ENCODE measurements at regions of chr2 and their contacts with region 1.

Region 1: GRCh38 chr2:102027036-102027980 is 35.5 kb downstream of the IL1R2 start:
- DNase-seq: peak in 1 of 5 donors; percentile 41
- ATAC-seq: peak; percentile 59 to 89 (median 79)
- H3K4me3 ChIP-seq: no peak overlapping the region
- H3K27ac ChIP-seq: peak overlapping the region; percentile 30 to 82 (median 66)
- H3K4me1 ChIP-seq: peaks cover 0 to 57% (median 11%) of the 10 kb centered on the region in 12 donors
- H3K27me3 ChIP-seq: no peaks in the 10 kb centered on the region
- CTCF ChIP-seq: no peak
- POLR2A ChIP-seq: no peak

Region 2: DNA sequence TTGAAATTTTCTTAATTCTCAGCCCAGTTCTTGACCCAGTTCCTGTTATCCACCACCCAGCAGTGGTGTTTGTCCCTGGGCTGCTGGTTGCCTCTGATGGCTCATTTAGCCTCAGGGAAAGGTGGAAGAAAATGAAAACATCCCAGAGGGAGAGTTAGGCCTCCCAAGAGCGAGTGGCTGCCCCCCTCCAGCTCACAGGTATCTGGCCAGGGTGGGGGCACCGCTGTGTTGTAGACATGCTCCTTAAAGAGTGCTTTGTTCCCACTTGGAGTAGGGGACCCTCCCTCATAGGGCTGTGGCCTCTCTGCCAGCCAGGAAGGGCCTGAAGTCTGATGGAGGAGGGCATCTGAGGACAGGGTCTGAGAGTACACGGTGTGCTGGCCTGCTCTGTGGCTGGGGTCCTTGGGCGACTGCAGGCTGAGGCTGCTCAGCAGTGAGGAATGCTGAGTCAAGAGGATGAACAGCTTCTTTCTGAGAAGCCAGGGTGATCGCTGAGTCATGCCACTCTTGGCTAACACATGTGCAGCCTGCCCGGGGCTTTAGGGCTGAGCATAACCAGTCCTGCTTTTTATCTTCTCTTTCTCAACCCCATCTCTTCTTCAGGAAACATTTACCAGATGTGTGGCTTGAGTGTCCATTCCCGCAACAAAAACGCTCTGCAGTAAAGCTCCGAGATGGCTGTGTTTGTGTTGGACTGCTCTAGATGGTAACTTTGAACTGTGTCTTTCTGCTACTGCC is 36.8 kb after region 1 on chr2:
- intact Hi-C with region 1: loop called in 6 of 10 experiments (anchors 1 to 5 kb)
- DNase-seq: peak; percentile 80 to 95 (median 87)
- ATAC-seq: peak; percentile 85 to 94 (median 92)
- H3K4me3 ChIP-seq: peak overlapping the region in 3 of 12 donors; percentile 11 to 12 (median 11)
- H3K27ac ChIP-seq: peak overlapping the region; percentile 77 to 97 (median 90)
- H3K4me1 ChIP-seq: peaks cover 0 to 79% (median 52%) of the 10 kb centered on the region in 12 donors
- H3K27me3 ChIP-seq: no peaks in the 10 kb centered on the region
- CTCF ChIP-seq: no peak
- POLR2A ChIP-seq: no peak

Measured in heart left ventricle (tissue), 16 donors.